Right cardiac atrium (tissue), 5 donors: ENCODE measurements at regions of chr7 and their contacts with region 1.

Region 1: GRCh38 chr7:71733107-71733870 is 601.3 kb downstream of the GALNT17 start:
- DNase-seq: peak; percentile 79 to 91 (median 91)
- ATAC-seq: peak; percentile 45 to 61
- H3K4me3 ChIP-seq: no peak overlapping the region
- H3K27ac ChIP-seq: no peak overlapping the region
- H3K4me1 ChIP-seq: no peaks in the 10 kb centered on the region
- H3K27me3 ChIP-seq: no peaks in the 10 kb centered on the region

Region 2: DNA sequence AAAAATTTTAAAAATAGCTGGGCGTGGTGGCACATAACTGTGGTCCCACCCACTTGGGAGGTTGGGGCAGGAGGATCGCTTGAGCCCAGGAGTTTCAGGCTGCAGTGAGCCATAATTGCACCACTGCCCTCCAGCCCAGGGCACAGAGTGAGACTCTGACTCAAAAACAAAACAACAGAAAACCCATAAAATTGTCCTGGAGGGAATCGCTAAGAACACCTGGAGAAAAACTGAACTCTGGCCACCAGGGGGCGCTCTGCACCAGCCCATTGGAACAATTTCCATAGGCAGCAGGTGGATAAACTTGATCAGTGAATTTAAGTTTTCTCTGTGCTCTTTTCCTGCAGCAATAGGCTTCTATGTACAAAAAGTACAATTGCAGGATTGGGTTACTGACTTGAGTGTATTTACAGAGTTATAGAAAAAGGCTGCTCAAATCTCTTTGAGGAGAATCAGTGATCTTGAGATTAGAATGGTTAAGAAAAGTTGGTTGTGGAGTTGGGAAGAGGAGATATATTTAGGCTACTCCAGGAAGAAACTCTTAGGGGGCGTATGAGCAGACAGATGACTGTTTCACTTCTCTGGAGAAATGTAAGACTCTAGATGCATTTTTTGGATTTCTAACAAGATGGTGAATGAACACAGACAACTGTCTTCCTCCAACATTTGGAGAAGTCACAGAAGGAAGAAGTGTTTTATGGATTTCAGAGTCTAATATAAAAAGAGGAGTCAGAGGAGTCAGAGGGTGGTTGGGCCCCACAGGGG is 876.2 kb before region 1 on chr7:
- intact Hi-C with region 1: loop called (anchors 1 to 5 kb)
- DNase-seq: peak; percentile 61 to 85 (median 74)
- ATAC-seq: no peak
- H3K4me3 ChIP-seq: no peak overlapping the region
- H3K27ac ChIP-seq: no peak overlapping the region
- H3K4me1 ChIP-seq: no peaks in the 10 kb centered on the region
- H3K27me3 ChIP-seq: no peaks in the 10 kb centered on the region

Region 3: GRCh38 chr7:71237945-71238344 is 495.3 kb before region 1 on chr7:
- intact Hi-C with region 1: loop called in 1 of 4 experiments (anchors 5 kb)
- DNase-seq: peak in 2 of 3 donors; percentile 49 to 60
- ATAC-seq: peak; percentile 77 to 91
- H3K4me3 ChIP-seq: no peak overlapping the region
- H3K27ac ChIP-seq: peak overlapping the region; percentile 20
- H3K4me1 ChIP-seq: no peaks in the 10 kb centered on the region
- H3K27me3 ChIP-seq: no peaks in the 10 kb centered on the region

Region 4: DNA sequence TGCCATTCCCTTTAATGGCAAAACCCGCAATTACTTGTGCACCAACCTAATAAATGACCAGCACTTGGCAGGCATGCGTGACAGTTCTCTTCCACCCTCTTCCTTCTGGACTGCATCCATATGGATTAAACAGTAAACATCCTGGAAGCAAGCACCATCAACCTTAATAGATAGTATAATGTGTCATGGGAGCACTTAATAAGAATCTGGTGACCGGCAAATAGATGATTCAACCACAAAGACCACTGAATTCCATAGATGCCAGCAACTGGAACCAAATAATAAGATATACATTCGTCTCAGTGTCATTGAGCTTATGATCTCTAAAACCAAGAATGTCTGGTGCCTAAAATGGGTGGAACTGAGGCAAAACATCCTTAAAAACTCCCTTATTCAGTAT is 68.7 kb after region 1 on chr7:
- intact Hi-C with region 1: no loop called
- DNase-seq: no peak
- ATAC-seq: no peak
- H3K4me3 ChIP-seq: no peak overlapping the region
- H3K27ac ChIP-seq: no peak overlapping the region
- H3K4me1 ChIP-seq: no peaks in the 10 kb centered on the region
- H3K27me3 ChIP-seq: no peaks in the 10 kb centered on the region